ENCODE measurements at regions of chr20 and their contacts with region 1.

Region 1: DNA sequence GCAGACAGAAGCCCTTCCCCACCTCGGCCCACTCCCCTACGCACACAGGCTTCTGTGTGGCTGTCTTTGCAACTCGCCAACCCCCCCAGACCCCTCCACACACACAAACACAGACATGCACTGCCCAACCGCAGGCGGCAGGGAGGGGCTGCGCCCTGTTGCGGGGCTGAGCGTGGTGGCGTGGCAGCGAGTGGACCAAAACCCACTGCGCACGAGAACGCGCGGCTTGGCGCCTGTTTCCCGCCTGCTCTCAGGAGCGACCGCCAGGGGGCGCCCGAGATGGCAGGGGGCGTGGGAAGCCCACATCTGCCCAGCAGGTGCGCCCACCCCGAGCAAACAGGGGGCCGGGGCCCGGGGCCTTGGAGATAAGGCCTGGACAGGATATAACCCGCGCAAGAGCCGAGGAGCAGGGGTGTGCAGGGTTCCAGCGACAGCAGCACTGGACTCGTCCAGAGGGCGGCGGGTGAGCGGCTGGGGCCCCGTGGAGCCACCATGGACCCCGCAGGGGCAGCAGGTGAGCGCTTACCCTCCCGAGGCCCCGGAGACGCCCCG is at the start of gene RBPJL:
- DNase-seq: no peak
- H3K4me3 ChIP-seq: no peak within 1 kb of the TSS
- CTCF ChIP-seq: peak; percentile 74

Region 2: DNA sequence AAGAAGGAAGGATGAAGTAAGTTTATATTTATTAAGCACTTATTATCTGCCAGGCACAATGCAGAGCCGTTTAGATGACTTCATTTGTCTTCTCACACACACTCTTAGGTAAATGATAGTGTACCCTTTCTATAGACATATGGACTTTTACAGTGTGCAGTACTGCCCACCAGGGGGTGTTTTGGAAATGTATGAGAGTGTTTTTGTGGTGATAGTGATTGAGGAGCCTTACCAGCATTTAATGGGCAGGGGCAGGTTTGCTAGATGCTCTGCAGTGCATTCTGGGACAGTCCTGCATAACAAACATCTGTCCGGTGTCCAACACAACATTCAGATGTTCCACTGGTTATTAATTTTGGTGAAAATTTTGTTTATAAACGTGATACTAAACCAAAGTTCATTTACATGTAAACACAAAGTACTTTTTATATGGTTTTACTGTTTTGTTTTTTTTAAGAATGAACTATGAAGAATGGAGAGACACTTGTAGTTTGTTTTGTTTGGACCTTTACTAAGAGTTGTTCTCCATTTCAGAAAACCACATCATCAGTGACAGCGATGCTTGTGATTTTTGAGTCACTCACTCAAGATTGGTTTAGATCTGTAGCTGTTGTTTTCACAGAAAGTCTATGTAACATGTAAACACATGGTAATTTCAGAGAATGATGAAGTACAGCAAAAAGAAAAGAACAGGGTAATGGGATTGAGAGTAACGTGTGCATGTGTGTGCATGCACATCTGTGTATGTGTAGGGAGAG is 225.5 kb before region 1 on chr20:
- in situ Hi-C with region 1: no loop called
- DNase-seq: no peak
- H3K4me3 ChIP-seq: no peak overlapping the region
- CTCF ChIP-seq: peak; percentile 52

Region 3: DNA sequence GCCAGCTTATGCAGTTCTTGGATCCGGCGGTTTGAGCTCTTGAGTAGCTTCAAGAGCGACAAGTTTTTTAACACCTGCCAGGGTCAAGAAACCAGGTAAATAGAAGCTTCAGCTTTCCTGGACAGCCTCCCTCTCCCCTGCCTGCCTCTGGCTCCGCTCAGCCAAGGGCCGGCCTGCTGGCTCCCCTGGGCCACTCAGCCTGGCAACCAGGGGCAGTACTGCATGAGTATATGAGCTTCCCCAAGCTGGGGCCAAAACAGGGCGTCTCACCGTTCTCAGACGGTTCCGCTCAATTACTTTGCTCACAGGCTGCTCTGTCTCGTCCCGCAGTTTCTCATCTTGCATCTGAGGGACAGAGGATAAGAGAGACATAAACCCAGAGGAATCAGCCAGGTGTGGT is 70.8 kb after region 1 on chr20:
- in situ Hi-C with region 1: loop called (anchors 5 kb)
- DNase-seq: no peak
- H3K4me3 ChIP-seq: no peak overlapping the region
- CTCF ChIP-seq: no peak

Region 4: GRCh38 chr20:45456632-45457031 is 150.1 kb after region 1 on chr20:
- in situ Hi-C with region 1: loop called (anchors 5 kb)
- DNase-seq: no peak
- H3K4me3 ChIP-seq: no peak overlapping the region
- CTCF ChIP-seq: no peak

Measured in astrocyte of the cerebellum (primary cell).